SK-N-SH (cell line): ENCODE measurements at regions of chr19 and their contacts with region 1.

Region 1: GRCh38 chr19:18281082-18282020 is at the start of gene JUND:
- DNase-seq: peak; percentile 95
- H3K4me3 ChIP-seq: peak within 1 kb of the TSS; percentile 74 to 92
- H3K27ac ChIP-seq: peak within 1 kb of the TSS; percentile 99 to 100
- H3K4me1 ChIP-seq: peaks cover 9 to 16% of the 10 kb centered on the region in 2 experiments; a peak in 3 of 4 replicates
- H3K27me3 ChIP-seq: no peaks in the 10 kb centered on the region
- CTCF ChIP-seq: 0 out of 2 replicates have a peak, but pooled peaks have one; percentile 5
- EP300 ChIP-seq: 0 out of 4 replicates have a peak, but pooled peaks of 1 of the 2 experiments have one; percentile 4
- RAD21 ChIP-seq: no peak
- polyA plus RNA-seq, gene JUND: 92.5 and 115 TPM in 2 replicates

Region 2: DNA sequence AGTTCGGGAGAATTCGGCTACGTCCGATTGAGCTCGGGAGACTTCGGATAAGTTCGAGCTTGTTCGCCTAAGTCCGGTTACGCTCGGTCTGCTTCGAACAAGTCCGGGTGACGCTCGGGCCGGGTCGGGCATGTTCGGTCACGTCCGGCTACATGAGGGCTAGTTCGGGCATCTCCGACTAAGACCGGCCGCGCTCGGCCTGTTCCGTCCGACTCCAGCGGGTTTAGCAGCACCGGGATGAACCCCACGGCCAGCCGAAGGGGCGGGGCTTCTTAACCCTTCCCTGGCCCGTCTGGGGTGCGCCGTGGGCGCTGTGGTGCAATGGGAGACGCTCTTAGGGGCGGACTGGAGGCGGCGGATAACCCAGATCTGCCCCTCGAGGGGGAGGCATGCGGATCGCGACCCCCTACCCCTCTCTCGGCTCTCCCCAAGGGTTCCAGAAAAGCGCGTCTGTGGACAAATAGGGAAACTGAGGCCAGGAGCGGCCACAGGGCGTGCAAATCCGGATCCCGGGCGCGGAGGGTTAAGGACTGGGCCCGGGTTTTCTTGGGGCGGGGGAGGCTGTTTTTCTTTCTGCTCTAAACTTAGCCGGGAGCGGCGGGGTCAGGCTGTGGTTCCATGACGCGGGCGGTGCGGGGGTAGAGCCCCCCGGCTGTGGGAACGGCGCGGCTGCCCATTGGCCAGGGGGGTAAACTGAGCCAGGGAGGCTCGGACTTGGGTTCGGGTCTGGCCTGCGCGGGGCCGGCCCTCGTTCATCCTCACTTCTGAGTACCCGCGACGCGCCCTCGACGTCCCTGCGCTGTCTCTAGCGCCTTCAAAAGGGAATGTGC is 56.6 kb before region 1 on chr19:
- CTCF ChIA-PET with region 1: interaction called, 17 read pairs
- POLR2A ChIA-PET with region 1: interaction called, 4 read pairs
- DNase-seq: peak; percentile 99
- H3K4me3 ChIP-seq: peak overlapping the region; percentile 55 to 59
- H3K27ac ChIP-seq: peak overlapping the region in 1 of 2 experiments; percentile 62; a peak in 1 of 4 replicates
- H3K4me1 ChIP-seq: peaks cover 0 to 19% of the 10 kb centered on the region in 2 experiments; a peak in 1 of 4 replicates
- H3K27me3 ChIP-seq: no peaks in the 10 kb centered on the region
- CTCF ChIP-seq: no peak
- EP300 ChIP-seq: no peak
- RAD21 ChIP-seq: no peak

Region 3: GRCh38 chr19:18259893-18260292 is 21.5 kb before region 1 on chr19:
- CTCF ChIA-PET with region 1: interaction called, 75 read pairs
- POLR2A ChIA-PET with region 1: interaction called, 4 read pairs
- DNase-seq: no peak
- H3K4me3 ChIP-seq: no peak overlapping the region
- H3K27ac ChIP-seq: no peak overlapping the region
- H3K4me1 ChIP-seq: no peaks in the 10 kb centered on the region
- H3K27me3 ChIP-seq: peaks cover 9% of the 10 kb centered on the region
- CTCF ChIP-seq: no peak
- EP300 ChIP-seq: no peak
- RAD21 ChIP-seq: no peak

Region 4: DNA sequence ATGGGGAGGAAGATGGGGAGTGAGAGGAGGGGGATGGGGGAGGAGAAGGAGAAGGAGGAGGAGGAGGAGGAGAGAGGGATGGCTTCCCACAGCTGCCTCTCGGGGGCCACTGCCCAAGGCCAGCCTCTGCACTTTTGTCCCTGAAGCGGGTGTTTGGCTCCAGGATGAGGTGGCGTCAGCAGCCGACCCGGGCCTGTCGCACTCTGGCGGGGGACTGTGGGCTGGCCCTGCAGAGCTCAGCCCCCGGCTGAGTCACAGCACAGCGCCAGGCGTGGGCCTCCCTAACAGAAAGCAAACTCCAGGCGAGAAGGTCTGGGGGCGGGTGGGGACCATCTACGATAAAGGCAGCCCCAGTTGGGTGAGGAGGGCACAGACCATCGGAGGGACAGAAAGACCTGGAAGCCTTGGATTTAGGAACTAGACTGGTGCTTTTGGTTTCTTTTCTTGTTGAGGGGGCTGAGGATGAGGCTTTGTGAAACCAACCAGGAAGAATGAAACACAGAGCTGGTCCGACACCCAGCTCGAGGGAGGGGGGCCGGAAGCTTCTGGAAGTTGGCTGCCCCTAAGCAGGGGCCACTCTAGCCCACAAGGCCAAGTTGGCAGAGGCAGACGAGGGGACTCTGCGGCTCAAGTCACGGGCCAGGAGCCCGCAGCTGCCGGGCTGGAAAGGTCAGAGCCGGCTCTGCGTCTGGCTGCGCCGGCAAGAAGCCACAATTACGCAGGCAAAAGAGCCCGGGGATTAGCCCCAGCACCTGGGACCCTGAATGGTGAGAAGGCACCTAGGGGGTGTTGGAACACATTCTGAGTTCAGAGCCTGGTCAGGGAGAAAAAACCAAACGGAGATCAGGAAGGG is 23.3 kb after region 1 on chr19:
- CTCF ChIA-PET with region 1: interaction called, 103 read pairs
- POLR2A ChIA-PET with region 1: interaction called, 50 read pairs
- DNase-seq: peak; percentile 92
- H3K4me3 ChIP-seq: peak overlapping the region; percentile 19 to 60
- H3K27ac ChIP-seq: peak overlapping the region; percentile 97 to 98
- H3K4me1 ChIP-seq: peaks cover 23% of the 10 kb centered on the region in 2 experiments; a peak in 3 of 4 replicates
- H3K27me3 ChIP-seq: no peaks in the 10 kb centered on the region
- CTCF ChIP-seq: no peak
- EP300 ChIP-seq: no peak
- RAD21 ChIP-seq: 0 out of 2 replicates have a peak, but pooled peaks have one; percentile 9

Region 5: DNA sequence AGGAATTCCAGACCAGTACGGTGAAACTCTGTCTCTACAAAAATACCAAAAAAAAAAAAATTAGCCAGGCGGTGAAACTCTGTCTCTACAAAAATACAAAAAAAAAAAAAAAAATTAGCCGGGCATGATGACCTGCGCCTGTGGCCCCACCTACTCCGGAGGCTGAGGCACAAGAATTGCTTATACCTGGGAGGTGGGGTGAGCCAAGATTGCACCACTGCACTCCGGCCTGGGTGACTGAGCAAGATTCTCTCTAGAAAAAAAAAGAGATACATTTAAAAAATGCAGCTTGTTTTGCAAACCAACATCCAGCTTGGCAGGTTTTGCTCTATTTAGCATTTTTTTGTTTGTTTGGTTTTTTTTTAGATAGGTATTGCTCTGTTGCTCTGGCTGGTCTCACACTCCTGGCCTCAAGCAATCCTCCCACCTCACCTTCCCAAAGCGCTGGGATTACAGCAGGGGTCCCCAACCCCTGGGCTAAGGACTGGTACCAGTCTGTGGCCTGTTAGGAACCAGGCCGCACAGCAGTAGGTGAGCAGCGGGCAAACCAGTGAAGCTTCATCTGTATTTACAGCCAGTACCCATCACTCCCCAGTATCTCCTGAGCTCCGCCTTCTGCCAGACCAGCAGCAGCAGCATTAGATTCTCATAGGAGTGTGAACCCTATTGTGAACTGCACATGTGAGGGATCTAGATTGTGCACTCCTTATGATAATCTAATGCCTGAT is 52.5 kb after region 1 on chr19:
- CTCF ChIA-PET with region 1: interaction called, 216 read pairs
- POLR2A ChIA-PET with region 1: interaction called, 34 read pairs
- DNase-seq: no peak
- H3K4me3 ChIP-seq: no peak overlapping the region
- H3K27ac ChIP-seq: no peak overlapping the region
- H3K4me1 ChIP-seq: peaks cover 5 to 6% of the 10 kb centered on the region in 2 experiments; a peak in 2 of 4 replicates
- H3K27me3 ChIP-seq: no peaks in the 10 kb centered on the region
- CTCF ChIP-seq: no peak
- EP300 ChIP-seq: no peak
- RAD21 ChIP-seq: no peak

Region 6: GRCh38 chr19:18408053-18408476 is 126.7 kb after region 1 on chr19:
- CTCF ChIA-PET with region 1: interaction called, 32 read pairs
- POLR2A ChIA-PET with region 1: no interaction called
- DNase-seq: peak; percentile 62
- H3K4me3 ChIP-seq: no peak overlapping the region
- H3K27ac ChIP-seq: no peak overlapping the region
- H3K4me1 ChIP-seq: no peaks in the 10 kb centered on the region
- H3K27me3 ChIP-seq: no peaks in the 10 kb centered on the region
- CTCF ChIP-seq: peak; percentile 55
- EP300 ChIP-seq: no peak
- RAD21 ChIP-seq: peak; percentile 48